ENCODE measurements at regions of chr9 and their contacts with region 1.

Region 1: GRCh38 chr9:129884220-129885017 is 49.2 kb downstream of the USP20 start:
- DNase-seq: peak; percentile 94
- H3K4me3 Mint-ChIP-seq: peak overlapping the region; percentile 82
- H3K27ac Mint-ChIP-seq: peak overlapping the region; percentile 99
- H3K4me1 Mint-ChIP-seq: peaks cover 39% of the 10 kb centered on the region
- H3K27me3 Mint-ChIP-seq: no peaks in the 10 kb centered on the region

Region 2: GRCh38 chr9:129487642-129488409 is 396.6 kb before region 1 on chr9:
- intact Hi-C with region 1: loop called (anchors 5 kb)
- DNase-seq: peak; percentile 28
- H3K4me3 Mint-ChIP-seq: peak overlapping the region; percentile 91
- H3K27ac Mint-ChIP-seq: peak overlapping the region; percentile 100
- H3K4me1 Mint-ChIP-seq: peaks cover 52% of the 10 kb centered on the region
- H3K27me3 Mint-ChIP-seq: no peaks in the 10 kb centered on the region

Region 3: GRCh38 chr9:129828051-129828450 is 56.4 kb before region 1 on chr9:
- intact Hi-C with region 1: no loop called
- DNase-seq: no peak
- H3K4me3 Mint-ChIP-seq: no peak overlapping the region
- H3K27ac Mint-ChIP-seq: no peak overlapping the region
- H3K4me1 Mint-ChIP-seq: peaks cover 1% of the 10 kb centered on the region
- H3K27me3 Mint-ChIP-seq: no peaks in the 10 kb centered on the region

Region 4: GRCh38 chr9:129863059-129863690 is 21.2 kb before region 1 on chr9:
- intact Hi-C with region 1: loop called (anchors 1 kb)
- DNase-seq: peak; percentile 79
- H3K4me3 Mint-ChIP-seq: peak overlapping the region; percentile 66
- H3K27ac Mint-ChIP-seq: peak overlapping the region; percentile 91
- H3K4me1 Mint-ChIP-seq: peaks cover 67% of the 10 kb centered on the region
- H3K27me3 Mint-ChIP-seq: no peaks in the 10 kb centered on the region

Region 5: DNA sequence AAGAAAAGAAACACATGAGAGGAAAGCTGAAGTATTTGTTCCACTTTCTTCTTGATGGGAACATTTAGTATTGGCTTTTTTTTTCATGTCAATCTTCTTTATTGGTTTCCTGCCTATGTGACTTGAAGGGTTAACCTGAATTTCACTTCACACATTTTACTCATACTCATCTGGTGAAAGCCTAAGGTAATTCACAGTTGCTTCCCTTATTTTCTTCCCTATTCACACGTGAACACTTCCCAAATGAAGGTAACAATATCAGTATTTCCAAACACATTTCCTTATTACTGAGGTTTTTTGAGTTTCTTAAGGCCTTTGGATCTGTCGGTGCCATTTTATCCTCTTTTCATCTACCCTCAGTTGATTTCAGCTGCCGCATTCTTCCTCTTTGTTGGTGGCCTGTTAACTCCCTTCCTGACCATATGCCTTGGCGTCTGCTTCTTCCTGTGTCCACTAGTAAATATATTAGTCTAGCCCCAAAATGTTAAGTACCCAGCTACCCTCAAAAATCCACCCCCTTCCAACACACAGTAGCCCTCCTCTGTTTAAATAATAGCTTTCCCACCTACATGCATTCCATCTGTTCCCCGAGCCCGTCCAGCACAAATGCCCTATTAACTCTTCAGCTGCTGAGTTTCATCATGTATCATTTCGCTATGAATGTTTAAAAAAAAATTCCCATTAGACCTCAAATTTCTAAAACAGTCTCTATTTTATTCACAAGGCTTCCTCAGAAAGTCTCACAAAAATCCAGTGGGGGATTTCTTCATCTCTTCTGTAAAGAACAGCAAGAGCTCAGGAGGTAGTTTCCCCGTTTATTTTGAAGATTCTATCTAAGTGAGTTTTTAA is 48.1 kb after region 1 on chr9:
- intact Hi-C with region 1: loop called (anchors 2 kb)
- DNase-seq: no peak
- H3K4me3 Mint-ChIP-seq: peak overlapping the region; percentile 59
- H3K27ac Mint-ChIP-seq: peak overlapping the region; percentile 86
- H3K4me1 Mint-ChIP-seq: peaks cover 61% of the 10 kb centered on the region
- H3K27me3 Mint-ChIP-seq: no peaks in the 10 kb centered on the region

Region 6: DNA sequence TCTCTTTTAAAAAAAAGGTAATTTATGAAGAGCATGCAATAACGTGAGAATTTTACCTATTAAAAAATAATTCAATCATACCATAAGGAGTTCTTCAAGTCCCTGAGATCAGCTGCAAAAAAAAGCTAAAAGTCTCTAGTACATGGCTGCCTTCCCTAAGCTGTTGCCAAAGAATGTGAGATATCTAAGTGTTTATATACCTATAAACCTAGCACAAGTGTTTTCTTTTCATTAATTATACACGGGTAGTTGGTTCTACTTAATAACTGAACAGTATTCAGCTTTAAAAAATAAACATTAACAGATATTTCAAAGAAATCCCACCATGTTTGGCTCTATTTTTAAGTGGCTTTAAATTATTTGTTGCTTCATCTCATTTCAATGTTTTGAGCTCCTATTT is 132.7 kb after region 1 on chr9:
- intact Hi-C with region 1: loop called (anchors 1 kb)
- DNase-seq: no peak
- H3K4me3 Mint-ChIP-seq: peak overlapping the region; percentile 51
- H3K27ac Mint-ChIP-seq: peak overlapping the region; percentile 99
- H3K4me1 Mint-ChIP-seq: peaks cover 49% of the 10 kb centered on the region
- H3K27me3 Mint-ChIP-seq: no peaks in the 10 kb centered on the region

Region 7: DNA sequence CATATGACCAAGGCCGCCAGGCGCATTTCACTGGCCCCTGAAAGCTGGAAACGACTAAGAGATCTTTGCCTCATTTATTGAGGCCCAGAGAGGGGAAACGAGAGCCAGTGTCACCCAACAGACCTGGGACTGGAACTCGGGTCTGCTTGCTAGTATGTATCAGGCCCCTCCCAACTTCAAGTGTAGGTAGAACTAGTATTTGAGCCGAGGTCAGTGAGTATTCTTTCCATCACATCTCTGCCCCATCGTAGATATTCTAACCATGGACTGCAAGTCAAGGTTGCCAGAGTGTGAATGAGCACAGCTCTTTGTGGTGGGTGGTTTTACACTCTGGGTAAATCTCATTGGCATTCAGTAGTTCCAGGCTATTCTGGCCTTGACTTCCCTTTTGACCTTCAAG is 211.5 kb after region 1 on chr9:
- intact Hi-C with region 1: loop called (anchors 5 kb)
- DNase-seq: no peak
- H3K4me3 Mint-ChIP-seq: no peak overlapping the region
- H3K27ac Mint-ChIP-seq: peak overlapping the region; percentile 62
- H3K4me1 Mint-ChIP-seq: peaks cover 13% of the 10 kb centered on the region
- H3K27me3 Mint-ChIP-seq: no peaks in the 10 kb centered on the region

Region 8: GRCh38 chr9:130235897-130236668 is 351.7 kb after region 1 on chr9:
- intact Hi-C with region 1: loop called (anchors 2 kb)
- DNase-seq: peak; percentile 49
- H3K4me3 Mint-ChIP-seq: no peak overlapping the region
- H3K27ac Mint-ChIP-seq: no peak overlapping the region
- H3K4me1 Mint-ChIP-seq: peaks cover 22% of the 10 kb centered on the region
- H3K27me3 Mint-ChIP-seq: peaks cover 2% of the 10 kb centered on the region

Measured in activated T-helper 2 cell treated with anti-CD3 and anti-CD28 coated beads, Interferon-gamma antibody, Interleukin-2, Interleukin-4, amounts not matched to agents 10 μg/mL and 5 μg/mL and 100 μg/mL, durations not matched to agents 14 hours and 24 hours and 36 hours (primary cell).